ENCODE measurements at regions of chr2 and their contacts with region 1.

Region 1: DNA sequence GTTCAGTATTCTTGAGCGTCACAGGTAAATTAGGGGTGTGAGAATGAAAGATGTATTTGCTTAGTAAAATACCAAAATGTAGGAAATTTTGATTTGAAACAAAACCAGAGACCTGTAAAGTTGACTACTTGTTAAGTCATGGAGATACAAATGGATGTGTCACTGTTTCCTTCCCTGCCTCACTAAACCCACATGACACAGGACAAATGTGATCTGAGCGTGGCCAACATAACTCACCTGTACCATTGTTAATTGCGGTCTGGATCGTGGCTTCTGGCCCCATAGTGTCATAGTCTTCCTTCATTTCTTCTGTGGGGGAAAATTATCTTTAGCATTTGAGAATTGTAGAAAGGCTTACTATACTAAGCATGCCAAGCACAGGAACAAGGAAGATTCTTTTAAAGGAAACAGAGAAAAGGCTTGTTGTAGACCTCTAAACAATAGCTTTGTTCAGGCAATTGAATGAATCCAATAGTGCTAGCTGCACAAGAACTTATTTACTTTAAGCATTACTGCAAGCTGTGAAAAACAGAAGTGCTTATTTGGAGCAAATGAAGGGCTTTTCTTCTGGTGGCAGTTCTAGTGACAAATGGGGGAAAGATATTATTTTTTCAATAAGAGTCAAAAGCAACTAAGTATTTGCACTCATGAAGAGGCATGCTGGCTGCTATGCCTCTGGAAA is 95.2 kb downstream of the ZEB2 start:
- DNase-seq: no peak
- ATAC-seq: peak in 1 of 3 donors; percentile 29
- H3K4me3 ChIP-seq: no peak overlapping the region
- H3K4me3 Mint-ChIP-seq: no peak overlapping the region
- H3K27ac ChIP-seq: no peak overlapping the region
- H3K27ac Mint-ChIP-seq: peak overlapping the region in 1 of 2 donors; percentile 84
- H3K4me1 ChIP-seq: peaks cover 2% of the 10 kb centered on the region
- H3K4me1 Mint-ChIP-seq: peaks cover 62 to 67% of the 10 kb centered on the region in 2 donors
- H3K27me3 ChIP-seq: no peaks in the 10 kb centered on the region
- H3K27me3 Mint-ChIP-seq: no peaks in the 10 kb centered on the region
- CTCF ChIP-seq: no peak

Region 2: DNA sequence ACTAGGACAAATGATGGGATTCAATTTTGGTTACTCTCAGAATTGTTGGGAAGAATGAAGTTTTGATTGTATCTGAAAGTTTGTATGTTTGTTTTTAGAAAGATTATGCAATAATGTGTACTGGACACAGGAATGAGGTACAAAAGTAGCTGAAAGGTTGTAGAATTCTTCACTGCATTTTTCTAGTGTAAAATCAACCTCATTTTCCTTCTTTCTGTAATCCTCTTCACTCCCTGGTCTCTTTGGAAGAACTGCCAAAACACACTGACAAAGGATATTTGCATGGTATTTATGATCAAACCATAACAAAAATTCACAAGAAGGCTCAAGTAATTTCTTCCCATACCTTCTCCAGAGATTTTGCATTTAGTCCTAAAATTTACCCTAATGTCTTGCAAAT is 15.5 kb before region 1 on chr2:
- intact Hi-C with region 1: loop called (anchors 2 kb)
- DNase-seq: no peak
- ATAC-seq: no peak
- H3K4me3 ChIP-seq: no peak overlapping the region
- H3K4me3 Mint-ChIP-seq: no peak overlapping the region
- H3K27ac ChIP-seq: no peak overlapping the region
- H3K27ac Mint-ChIP-seq: peak overlapping the region; percentile 65 to 96
- H3K4me1 ChIP-seq: peaks cover 8% of the 10 kb centered on the region
- H3K4me1 Mint-ChIP-seq: peaks cover 47 to 55% of the 10 kb centered on the region in 2 donors
- H3K27me3 ChIP-seq: no peaks in the 10 kb centered on the region
- H3K27me3 Mint-ChIP-seq: no peaks in the 10 kb centered on the region
- CTCF ChIP-seq: no peak

Measured in natural killer cell (primary cell).